CD4-positive, alpha-beta memory T cell (primary cell): ENCODE measurements at regions of chr6 and their contacts with region 1.

Region 1: GRCh38 chr6:130132286-130132701 is 90.5 kb downstream of the SAMD3 start:
- DNase-seq: peak; percentile 74 to 91 (median 86)
- H3K4me3 ChIP-seq: peak overlapping the region in 1 of 2 donors; percentile 21
- H3K4me3 Mint-ChIP-seq: peak overlapping the region; percentile 53 to 87 (median 74)
- H3K27ac ChIP-seq: peak overlapping the region; percentile 50
- H3K27ac Mint-ChIP-seq: peak overlapping the region; percentile 82 to 97 (median 96)
- H3K4me1 ChIP-seq: peaks cover 72% of the 10 kb centered on the region
- H3K4me1 Mint-ChIP-seq: peaks cover 66 to 93% (median 73%) of the 10 kb centered on the region in 4 donors
- H3K27me3 ChIP-seq: no peaks in the 10 kb centered on the region
- H3K27me3 Mint-ChIP-seq: no peaks in the 10 kb centered on the region

Region 2: DNA sequence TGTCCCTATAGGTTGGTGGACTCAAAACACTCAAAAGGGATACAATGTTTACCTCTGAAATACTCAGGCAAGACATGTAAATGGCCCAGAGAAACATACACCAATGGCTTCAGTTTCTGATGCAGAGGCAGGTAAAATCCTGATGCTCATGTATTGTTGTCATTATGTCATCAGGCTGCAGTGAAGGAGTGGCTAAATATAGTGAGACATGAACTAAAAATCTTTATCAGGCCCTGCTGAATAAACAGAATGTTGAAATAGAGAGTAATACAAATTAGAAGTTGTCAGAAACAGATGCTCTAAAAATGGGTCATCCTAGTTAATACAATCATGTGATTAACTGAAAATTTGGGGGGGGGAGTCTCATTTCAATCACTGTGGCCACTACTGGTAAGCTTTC is 1632.3 kb before region 1 on chr6:
- CTCF ChIA-PET with region 1: no interaction called
- POLR2A ChIA-PET with region 1: no interaction called
- intact Hi-C with region 1: no loop called
- DNase-seq: no peak
- H3K4me3 ChIP-seq: no peak overlapping the region
- H3K4me3 Mint-ChIP-seq: no peak overlapping the region
- H3K27ac ChIP-seq: no peak overlapping the region
- H3K27ac Mint-ChIP-seq: no peak overlapping the region
- H3K4me1 ChIP-seq: no peaks in the 10 kb centered on the region
- H3K4me1 Mint-ChIP-seq: peaks cover 0 to 1% (median 0%) of the 10 kb centered on the region in 4 donors
- H3K27me3 ChIP-seq: no peaks in the 10 kb centered on the region
- H3K27me3 Mint-ChIP-seq: peaks cover 3 to 6% of the 10 kb centered on the region in 2 donors

Region 3: DNA sequence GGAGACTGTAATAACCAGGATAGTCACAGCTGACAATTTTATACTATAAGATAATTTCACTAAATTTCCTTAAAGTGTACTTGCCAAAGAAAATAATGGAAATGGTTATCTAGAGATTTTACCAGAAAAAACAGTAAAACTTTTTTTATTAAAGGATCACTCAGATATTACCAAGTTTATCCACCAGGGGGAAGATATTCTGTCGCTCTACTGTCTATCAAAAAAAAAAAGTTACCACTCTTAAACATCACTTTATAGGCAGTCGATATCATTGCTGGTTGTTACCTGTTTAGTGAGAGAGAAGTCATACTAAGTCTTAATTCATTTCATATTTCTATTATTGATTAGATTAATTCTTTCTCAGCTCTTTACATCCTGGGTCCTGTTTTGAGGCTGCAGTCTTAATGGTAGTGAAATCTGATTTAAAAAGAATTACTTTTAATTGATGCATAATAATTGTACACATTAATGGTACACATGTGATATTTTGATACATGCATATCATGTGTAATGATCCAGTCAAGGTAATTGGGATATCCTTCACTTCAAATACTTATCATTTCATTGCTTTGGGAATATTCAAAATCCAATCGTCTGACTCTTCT is 95.0 kb before region 1 on chr6:
- CTCF ChIA-PET with region 1: interaction called, 7 read pairs
- POLR2A ChIA-PET with region 1: interaction called, 3 read pairs
- intact Hi-C with region 1: loop called (anchors 5 kb)
- DNase-seq: peak in 4 of 5 donors; percentile 21 to 38 (median 27)
- H3K4me3 ChIP-seq: no peak overlapping the region
- H3K4me3 Mint-ChIP-seq: no peak overlapping the region
- H3K27ac ChIP-seq: no peak overlapping the region
- H3K27ac Mint-ChIP-seq: no peak overlapping the region
- H3K4me1 ChIP-seq: peaks cover 54% of the 10 kb centered on the region
- H3K4me1 Mint-ChIP-seq: peaks cover 40 to 67% (median 58%) of the 10 kb centered on the region in 4 donors
- H3K27me3 ChIP-seq: no peaks in the 10 kb centered on the region
- H3K27me3 Mint-ChIP-seq: no peaks in the 10 kb centered on the region

Region 4: GRCh38 chr6:130070792-130071191 is 61.5 kb before region 1 on chr6:
- CTCF ChIA-PET with region 1: no interaction called
- POLR2A ChIA-PET with region 1: interaction called, 3 read pairs
- intact Hi-C with region 1: loop called (anchors 5 kb)
- DNase-seq: peak in 1 of 5 donors; percentile 45
- H3K4me3 ChIP-seq: no peak overlapping the region
- H3K4me3 Mint-ChIP-seq: peak overlapping the region in 6 of 8 donors; percentile 1 to 66 (median 63)
- H3K27ac ChIP-seq: no peak overlapping the region
- H3K27ac Mint-ChIP-seq: peak overlapping the region in 6 of 7 donors; percentile 62 to 91 (median 82)
- H3K4me1 ChIP-seq: peaks cover 8% of the 10 kb centered on the region
- H3K4me1 Mint-ChIP-seq: peaks cover 20 to 35% (median 26%) of the 10 kb centered on the region in 4 donors
- H3K27me3 ChIP-seq: no peaks in the 10 kb centered on the region
- H3K27me3 Mint-ChIP-seq: no peaks in the 10 kb centered on the region

Region 5: DNA sequence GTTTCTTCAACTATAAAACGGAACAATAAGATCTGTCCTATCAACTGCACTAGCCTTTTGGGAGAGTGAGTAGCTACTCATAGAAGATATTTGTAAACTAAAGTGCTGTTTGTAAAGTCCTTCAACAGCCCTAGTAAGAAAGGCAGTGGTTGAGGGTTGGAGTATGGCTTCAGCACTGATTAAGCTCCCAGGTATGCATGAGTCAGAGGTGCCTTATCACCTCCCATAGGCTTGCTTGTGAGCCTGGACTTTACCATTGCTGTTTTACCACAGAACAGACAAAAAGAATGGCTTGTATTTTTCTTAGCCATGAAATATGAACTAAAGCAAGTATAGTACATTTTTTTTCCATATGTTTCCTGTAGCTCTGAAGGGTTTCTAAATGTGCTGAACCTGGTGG is 46.4 kb after region 1 on chr6:
- CTCF ChIA-PET with region 1: interaction called, 4 read pairs
- POLR2A ChIA-PET with region 1: interaction called, 11 read pairs
- intact Hi-C with region 1: no loop called
- DNase-seq: no peak
- H3K4me3 ChIP-seq: no peak overlapping the region
- H3K4me3 Mint-ChIP-seq: no peak overlapping the region
- H3K27ac ChIP-seq: no peak overlapping the region
- H3K27ac Mint-ChIP-seq: peak overlapping the region in 1 of 7 donors; percentile 25
- H3K4me1 ChIP-seq: peaks cover 8% of the 10 kb centered on the region
- H3K4me1 Mint-ChIP-seq: peaks cover 13 to 27% (median 19%) of the 10 kb centered on the region in 4 donors
- H3K27me3 ChIP-seq: no peaks in the 10 kb centered on the region
- H3K27me3 Mint-ChIP-seq: no peaks in the 10 kb centered on the region

Region 6: DNA sequence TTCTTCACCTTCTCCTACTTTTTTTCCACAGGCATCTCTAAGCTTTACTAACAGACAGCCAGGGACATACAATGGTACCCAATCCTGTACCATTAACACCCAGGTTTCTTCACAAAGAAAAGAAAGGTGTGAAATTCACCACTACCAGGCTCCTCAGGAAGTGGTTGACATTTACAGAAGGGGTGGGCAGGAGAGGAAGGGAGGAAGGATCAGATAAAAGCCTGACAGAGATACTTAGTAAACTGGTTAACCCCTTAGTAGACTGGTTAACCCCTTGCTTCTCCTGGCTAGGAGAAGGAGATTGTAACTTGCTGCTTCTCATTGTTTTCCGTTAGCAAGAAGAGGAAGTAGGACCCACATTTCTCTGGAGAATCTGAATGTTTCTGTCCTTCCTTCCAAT is 83.2 kb after region 1 on chr6:
- CTCF ChIA-PET with region 1: interaction called, 4 read pairs
- POLR2A ChIA-PET with region 1: interaction called, 15 read pairs
- intact Hi-C with region 1: loop called (anchors 1 kb)
- DNase-seq: peak; percentile 71 to 82 (median 78)
- H3K4me3 ChIP-seq: peak overlapping the region; percentile 7 to 39
- H3K4me3 Mint-ChIP-seq: peak overlapping the region; percentile 79 to 95 (median 86)
- H3K27ac ChIP-seq: peak overlapping the region; percentile 23
- H3K27ac Mint-ChIP-seq: peak overlapping the region; percentile 25 to 89 (median 69)
- H3K4me1 ChIP-seq: peaks cover 77% of the 10 kb centered on the region
- H3K4me1 Mint-ChIP-seq: peaks cover 38 to 78% (median 61%) of the 10 kb centered on the region in 4 donors
- H3K27me3 ChIP-seq: no peaks in the 10 kb centered on the region
- H3K27me3 Mint-ChIP-seq: no peaks in the 10 kb centered on the region

Region 7: DNA sequence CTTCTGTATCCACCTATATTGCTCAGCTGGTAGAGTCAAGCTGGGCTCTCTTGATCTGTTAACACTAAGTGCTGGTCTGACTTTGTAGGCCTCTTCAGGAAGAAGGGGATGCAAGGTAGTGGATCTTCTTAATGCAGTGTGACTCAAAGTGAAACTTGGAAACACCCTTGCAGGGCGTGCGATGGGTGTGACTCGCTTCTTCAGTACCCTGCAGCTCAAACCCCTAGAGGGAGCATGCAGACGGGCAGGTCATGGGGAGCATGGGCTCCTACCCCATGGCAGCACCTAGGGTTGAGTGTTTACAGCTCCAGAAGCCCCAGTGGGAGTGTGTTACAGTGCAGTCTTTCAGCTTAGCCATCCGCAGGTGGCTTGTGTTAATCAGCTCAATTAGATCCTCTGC is 91.2 kb after region 1 on chr6:
- CTCF ChIA-PET with region 1: interaction called, 16 read pairs
- POLR2A ChIA-PET with region 1: interaction called, 22 read pairs
- intact Hi-C with region 1: loop called (anchors 2 kb)
- DNase-seq: peak; percentile 60 to 78 (median 63)
- H3K4me3 ChIP-seq: no peak overlapping the region
- H3K4me3 Mint-ChIP-seq: peak overlapping the region; percentile 62 to 93 (median 89)
- H3K27ac ChIP-seq: peak overlapping the region; percentile 47
- H3K27ac Mint-ChIP-seq: peak overlapping the region; percentile 83 to 96 (median 92)
- H3K4me1 ChIP-seq: peaks cover 39% of the 10 kb centered on the region
- H3K4me1 Mint-ChIP-seq: peaks cover 27 to 52% (median 40%) of the 10 kb centered on the region in 4 donors
- H3K27me3 ChIP-seq: no peaks in the 10 kb centered on the region
- H3K27me3 Mint-ChIP-seq: no peaks in the 10 kb centered on the region

Region 8: DNA sequence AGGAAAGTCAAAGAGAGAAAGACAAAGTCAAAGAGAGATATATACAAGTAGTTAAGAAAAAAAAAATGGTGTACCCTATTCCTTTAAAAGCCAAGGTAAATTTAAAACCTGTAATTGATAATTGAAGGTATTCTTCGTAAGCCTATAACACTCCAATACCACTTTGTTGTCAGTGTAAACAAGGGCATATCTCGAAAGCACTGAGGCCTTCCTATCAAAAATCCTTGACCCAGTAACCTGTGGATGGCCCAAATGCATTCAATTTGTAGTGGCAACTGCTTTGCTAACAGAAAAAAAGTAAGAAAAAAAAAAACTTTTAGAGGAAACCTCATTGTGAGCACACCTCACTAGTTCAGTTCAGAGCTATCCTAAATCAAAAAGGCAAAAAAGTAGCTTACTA is 129.7 kb after region 1 on chr6:
- CTCF ChIA-PET with region 1: no interaction called
- POLR2A ChIA-PET with region 1: no interaction called
- intact Hi-C with region 1: loop called (anchors 5 kb)
- DNase-seq: no peak
- H3K4me3 ChIP-seq: no peak overlapping the region
- H3K4me3 Mint-ChIP-seq: peak overlapping the region in 7 of 8 donors; percentile 79 to 87 (median 82)
- H3K27ac ChIP-seq: peak overlapping the region; percentile 31
- H3K27ac Mint-ChIP-seq: peak overlapping the region in 6 of 7 donors; percentile 78 to 97 (median 90)
- H3K4me1 ChIP-seq: peaks cover 33% of the 10 kb centered on the region
- H3K4me1 Mint-ChIP-seq: peaks cover 17 to 44% (median 30%) of the 10 kb centered on the region in 4 donors
- H3K27me3 ChIP-seq: no peaks in the 10 kb centered on the region
- H3K27me3 Mint-ChIP-seq: no peaks in the 10 kb centered on the region